A673 (cell line): ENCODE measurements at regions of chr22 and their contacts with region 1.

Region 1: DNA sequence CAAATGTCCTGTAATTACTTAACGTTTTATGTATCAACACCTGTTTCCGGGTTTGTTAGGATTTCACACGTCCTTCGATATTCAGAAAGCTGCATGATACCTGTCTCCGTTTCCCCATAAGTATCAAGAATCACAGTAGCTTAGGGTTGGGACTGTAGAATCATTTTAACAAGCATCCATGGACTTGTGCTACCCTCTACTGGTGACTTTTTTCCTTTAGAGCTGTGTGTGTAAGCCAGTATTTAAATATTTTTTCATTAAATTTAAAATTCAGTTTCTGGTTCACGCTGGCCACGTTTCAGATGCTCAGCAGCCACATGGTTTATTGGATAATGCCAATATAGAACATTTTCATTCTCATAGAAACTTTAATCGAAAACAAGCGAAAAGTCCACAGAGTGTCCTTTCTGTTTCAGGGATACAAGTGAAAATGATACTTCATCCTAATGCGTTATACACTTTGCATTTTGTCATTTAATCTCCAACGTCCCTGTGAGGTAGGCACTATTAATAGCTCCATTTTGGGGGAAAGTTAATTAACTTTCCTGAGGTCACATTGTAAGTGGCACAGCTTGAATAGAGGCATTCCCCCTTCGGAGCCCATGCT is 61.5 kb upstream of the SLC25A18 start:
- DNase-seq: peak; percentile 76
- H3K4me3 ChIP-seq: no peak overlapping the region
- H3K27ac ChIP-seq: no peak overlapping the region
- H3K4me1 ChIP-seq: no peaks in the 10 kb centered on the region
- H3K27me3 ChIP-seq: no peaks in the 10 kb centered on the region
- CTCF ChIP-seq: peak; percentile 79

Region 2: GRCh38 chr22:16917144-16918003 is 584.4 kb before region 1 on chr22:
- CTCF ChIA-PET with region 1: no interaction called
- POLR2A ChIA-PET with region 1: no interaction called
- intact Hi-C with region 1: loop called (anchors 5 kb)
- DNase-seq: peak; percentile 78
- H3K4me3 ChIP-seq: no peak overlapping the region
- H3K27ac ChIP-seq: no peak overlapping the region
- H3K4me1 ChIP-seq: no peaks in the 10 kb centered on the region
- H3K27me3 ChIP-seq: peaks cover 31% of the 10 kb centered on the region
- CTCF ChIP-seq: peak; percentile 82

Region 3: GRCh38 chr22:17119481-17120202 is 382.1 kb before region 1 on chr22:
- CTCF ChIA-PET with region 1: no interaction called
- POLR2A ChIA-PET with region 1: no interaction called
- intact Hi-C with region 1: loop called (anchors 10 kb)
- DNase-seq: peak; percentile 23
- H3K4me3 ChIP-seq: no peak overlapping the region
- H3K27ac ChIP-seq: no peak overlapping the region
- H3K4me1 ChIP-seq: no peaks in the 10 kb centered on the region
- H3K27me3 ChIP-seq: no peaks in the 10 kb centered on the region
- CTCF ChIP-seq: peak; percentile 50

Region 4: GRCh38 chr22:17176715-17177114 is 325.1 kb before region 1 on chr22:
- CTCF ChIA-PET with region 1: interaction called, 46 read pairs
- POLR2A ChIA-PET with region 1: no interaction called
- intact Hi-C with region 1: loop called (anchors 1 kb)
- DNase-seq: no peak
- H3K4me3 ChIP-seq: no peak overlapping the region
- H3K27ac ChIP-seq: no peak overlapping the region
- H3K4me1 ChIP-seq: no peaks in the 10 kb centered on the region
- H3K27me3 ChIP-seq: no peaks in the 10 kb centered on the region
- CTCF ChIP-seq: no peak

Region 5: GRCh38 chr22:17205432-17205831 is 296.4 kb before region 1 on chr22:
- CTCF ChIA-PET with region 1: interaction called, 13 read pairs
- POLR2A ChIA-PET with region 1: no interaction called
- intact Hi-C with region 1: loop called (anchors 10 kb)
- DNase-seq: peak; percentile 31
- H3K4me3 ChIP-seq: no peak overlapping the region
- H3K27ac ChIP-seq: no peak overlapping the region
- H3K4me1 ChIP-seq: no peaks in the 10 kb centered on the region
- H3K27me3 ChIP-seq: no peaks in the 10 kb centered on the region
- CTCF ChIP-seq: peak; percentile 39

Region 6: DNA sequence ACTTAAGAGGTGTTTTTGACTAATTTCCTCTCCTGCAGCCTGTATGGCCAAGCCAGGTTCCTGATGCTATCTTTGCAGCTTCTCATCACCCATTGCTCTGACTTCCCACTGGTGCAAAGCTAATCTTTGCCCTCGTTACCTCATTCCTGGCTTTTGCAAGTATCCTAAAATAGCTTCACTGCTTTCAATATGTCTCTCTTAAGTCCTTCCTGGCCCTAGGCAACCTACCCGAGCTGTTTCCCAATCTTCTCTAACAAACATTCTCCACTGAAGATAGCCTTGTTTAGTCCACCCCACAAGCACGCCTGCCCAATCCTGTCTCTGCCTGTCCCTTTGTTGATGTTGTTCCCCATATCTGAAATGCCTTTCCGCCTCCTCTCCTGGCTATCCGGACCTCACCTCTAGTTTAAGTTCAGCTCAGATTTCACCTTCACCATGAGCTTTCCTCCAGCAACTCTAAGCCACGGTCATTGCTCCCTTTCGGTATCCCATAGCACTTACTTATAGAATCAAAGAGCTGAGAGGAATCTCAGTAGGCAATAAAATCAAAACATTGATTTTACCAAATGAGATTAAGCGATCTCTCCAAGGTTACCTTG is 162.6 kb before region 1 on chr22:
- CTCF ChIA-PET with region 1: no interaction called
- POLR2A ChIA-PET with region 1: no interaction called
- intact Hi-C with region 1: no loop called
- DNase-seq: no peak
- H3K4me3 ChIP-seq: no peak overlapping the region
- H3K27ac ChIP-seq: no peak overlapping the region
- H3K4me1 ChIP-seq: no peaks in the 10 kb centered on the region
- H3K27me3 ChIP-seq: no peaks in the 10 kb centered on the region
- CTCF ChIP-seq: no peak

Region 7: GRCh38 chr22:17368554-17369438 is 133.0 kb before region 1 on chr22:
- CTCF ChIA-PET with region 1: interaction called, 26 read pairs
- POLR2A ChIA-PET with region 1: no interaction called
- intact Hi-C with region 1: loop called (anchors 5 kb)
- DNase-seq: peak; percentile 56
- H3K4me3 ChIP-seq: peak overlapping the region; percentile 50
- H3K27ac ChIP-seq: peak overlapping the region; percentile 41
- H3K4me1 ChIP-seq: peaks cover 7% of the 10 kb centered on the region
- H3K27me3 ChIP-seq: peaks cover 43% of the 10 kb centered on the region
- CTCF ChIP-seq: no peak